Psoas muscle (tissue), 8 donors: ENCODE measurements at regions of chr14 and their contacts with region 1.

Region 1: DNA sequence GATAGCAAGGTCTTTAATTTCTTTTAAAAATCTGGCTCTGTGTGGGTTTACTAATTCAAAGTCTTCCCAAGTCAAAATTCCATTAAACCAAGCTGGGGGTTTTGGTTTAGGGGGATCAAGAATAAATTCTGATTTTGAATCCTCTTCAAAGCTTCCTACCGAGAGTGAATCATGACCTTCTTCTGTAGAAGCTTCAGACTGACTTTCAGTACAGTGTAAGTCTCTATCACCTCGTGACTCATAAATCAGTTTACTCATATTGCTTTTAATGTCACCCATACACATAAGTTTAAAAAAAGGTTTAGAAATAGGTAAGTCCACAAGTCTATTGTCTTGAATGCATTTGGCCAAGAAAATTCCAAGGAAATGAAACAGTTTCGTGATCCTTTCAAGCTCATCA is 80.6 kb upstream of the STRN3 start:
- DNase-seq: no peak
- ATAC-seq: peak; percentile 68 to 81 (median 73)
- H3K4me3 ChIP-seq: no peak overlapping the region
- H3K27ac ChIP-seq: peak overlapping the region; percentile 57
- H3K4me1 ChIP-seq: no peaks in the 10 kb centered on the region
- H3K27me3 ChIP-seq: no peaks in the 10 kb centered on the region
- CTCF ChIP-seq: no peak

Region 2: GRCh38 chr14:31142455-31143087 is 35.8 kb after region 1 on chr14:
- intact Hi-C with region 1: loop called in 1 of 2 experiments (anchors 5 kb)
- DNase-seq: no peak
- ATAC-seq: peak; percentile 52 to 74 (median 64)
- H3K4me3 ChIP-seq: no peak overlapping the region
- H3K27ac ChIP-seq: no peak overlapping the region
- H3K4me1 ChIP-seq: peaks cover 16% of the 10 kb centered on the region
- H3K27me3 ChIP-seq: no peaks in the 10 kb centered on the region
- CTCF ChIP-seq: no peak

Region 3: GRCh38 chr14:31159682-31160296 is 53.0 kb after region 1 on chr14:
- intact Hi-C with region 1: loop called in 1 of 2 experiments (anchors 5 kb)
- DNase-seq: no peak
- ATAC-seq: peak in 2 of 4 donors; percentile 30 to 35
- H3K4me3 ChIP-seq: no peak overlapping the region
- H3K27ac ChIP-seq: no peak overlapping the region
- H3K4me1 ChIP-seq: peaks cover 3% of the 10 kb centered on the region
- H3K27me3 ChIP-seq: no peaks in the 10 kb centered on the region
- CTCF ChIP-seq: no peak